ENCODE measurements at regions of chr2 and their contacts with region 1.

Region 1: GRCh38 chr2:85420536-85421259 is 2.2 kb downstream of the SH2D6 start:
- DNase-seq: peak; percentile 92
- ATAC-seq: peak; percentile 60
- H3K4me3 ChIP-seq: peak overlapping the region; percentile 49
- H3K27ac ChIP-seq: peak overlapping the region; percentile 98
- H3K4me1 ChIP-seq: peaks cover 43% of the 10 kb centered on the region
- H3K27me3 ChIP-seq: no peaks in the 10 kb centered on the region
- CTCF ChIP-seq: peak; percentile 99

Region 2: GRCh38 chr2:85457877-85458316 is 37.2 kb after region 1 on chr2:
- CTCF ChIA-PET with region 1: no interaction called
- POLR2A ChIA-PET with region 1: no interaction called
- intact Hi-C with region 1: loop called (anchors 1 kb)
- DNase-seq: peak; percentile 98
- ATAC-seq: peak; percentile 92
- H3K4me3 ChIP-seq: no peak overlapping the region
- H3K27ac ChIP-seq: peak overlapping the region; percentile 94
- H3K4me1 ChIP-seq: peaks cover 34% of the 10 kb centered on the region
- H3K27me3 ChIP-seq: no peaks in the 10 kb centered on the region
- CTCF ChIP-seq: no peak

Region 3: DNA sequence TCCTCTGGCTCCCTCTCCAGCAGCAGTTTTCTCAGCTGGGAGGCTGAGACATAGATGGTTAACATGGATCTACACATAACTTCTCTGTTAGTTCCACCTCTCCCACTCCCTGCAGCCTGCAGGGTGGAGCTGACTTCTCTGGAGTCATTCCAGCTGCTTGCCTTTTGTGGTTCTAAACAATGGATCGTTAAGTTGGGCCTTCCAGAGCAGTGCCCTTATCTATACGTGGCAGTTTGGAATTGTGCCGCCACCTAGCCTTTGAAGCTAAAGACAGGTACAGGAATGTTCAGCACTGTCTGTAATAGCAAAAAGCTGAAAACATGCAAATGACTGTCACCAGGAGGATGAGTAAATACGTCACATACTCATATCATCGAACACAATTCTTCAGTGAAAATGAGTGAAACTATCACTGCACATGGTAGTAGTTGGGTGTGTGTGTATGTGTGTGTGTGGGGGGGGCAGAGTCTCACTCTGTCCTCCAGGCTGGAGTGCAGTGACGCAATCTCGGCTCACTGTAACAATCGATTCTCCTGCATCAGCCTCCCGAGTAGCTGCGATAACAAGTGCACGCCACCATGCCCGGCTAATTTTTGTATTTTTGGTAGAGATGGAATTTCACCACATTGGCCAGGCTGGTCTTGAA is 48.1 kb after region 1 on chr2:
- CTCF ChIA-PET with region 1: interaction called, 5 read pairs
- POLR2A ChIA-PET with region 1: interaction called, 11 read pairs
- intact Hi-C with region 1: loop called (anchors 2 kb)
- DNase-seq: peak; percentile 95
- ATAC-seq: peak; percentile 80
- H3K4me3 ChIP-seq: no peak overlapping the region
- H3K27ac ChIP-seq: peak overlapping the region; percentile 50
- H3K4me1 ChIP-seq: peaks cover 31% of the 10 kb centered on the region
- H3K27me3 ChIP-seq: no peaks in the 10 kb centered on the region
- CTCF ChIP-seq: 0 out of 2 replicates have a peak, but pooled peaks have one; percentile 17

Region 4: DNA sequence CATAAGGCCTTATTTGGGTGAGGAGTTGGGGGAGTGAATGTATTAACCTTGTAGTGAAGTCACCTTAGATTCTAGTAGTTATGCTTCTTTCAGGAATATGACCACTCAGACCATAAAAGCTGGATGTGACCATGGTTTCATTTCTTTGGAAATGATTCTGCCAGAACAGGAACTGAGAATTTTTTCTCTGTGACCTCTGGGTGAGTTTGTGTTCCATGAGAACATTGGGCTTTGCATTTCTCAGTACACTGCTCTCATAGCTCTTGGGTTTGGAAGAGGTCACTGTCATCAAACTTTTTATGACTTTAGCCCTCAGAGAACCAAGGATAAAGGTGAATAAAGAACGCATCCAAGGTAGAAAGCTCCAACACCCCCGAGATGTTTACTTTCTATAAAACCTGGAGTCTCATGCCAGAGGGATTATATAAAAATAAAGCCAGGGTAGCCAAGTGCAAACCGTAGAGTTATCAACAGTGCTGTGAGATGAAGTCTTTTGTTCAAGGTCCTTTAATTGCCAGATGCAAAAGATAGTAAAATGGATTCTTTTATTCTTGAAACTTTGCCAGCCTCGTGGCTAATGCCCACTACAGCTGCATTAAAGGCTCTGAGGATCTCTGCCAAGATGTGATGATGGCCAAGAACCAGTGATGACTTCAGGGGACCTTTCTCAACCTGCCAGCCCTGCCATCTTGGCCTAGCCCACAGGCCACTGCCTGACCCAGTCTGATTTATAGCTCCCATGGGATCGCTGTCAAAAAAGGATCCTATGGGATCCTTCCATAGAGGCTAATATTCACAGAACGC is 90.5 kb after region 1 on chr2:
- CTCF ChIA-PET with region 1: no interaction called
- POLR2A ChIA-PET with region 1: interaction called, 6 read pairs
- intact Hi-C with region 1: loop called (anchors 1 kb)
- DNase-seq: peak; percentile 77
- ATAC-seq: peak; percentile 87
- H3K4me3 ChIP-seq: no peak overlapping the region
- H3K27ac ChIP-seq: peak overlapping the region; percentile 82
- H3K4me1 ChIP-seq: peaks cover 53% of the 10 kb centered on the region
- H3K27me3 ChIP-seq: no peaks in the 10 kb centered on the region
- CTCF ChIP-seq: no peak

Region 5: GRCh38 chr2:85538486-85539360 is 118.0 kb after region 1 on chr2 and contains the start of gene MAT2A:
- CTCF ChIA-PET with region 1: interaction called, 4 read pairs
- POLR2A ChIA-PET with region 1: interaction called, 17 read pairs
- intact Hi-C with region 1: loop called (anchors 1 kb)
- DNase-seq: peak; percentile 93
- ATAC-seq: peak; percentile 57
- H3K4me3 ChIP-seq: peak within 1 kb of the TSS; percentile 95
- H3K27ac ChIP-seq: peak within 1 kb of the TSS; percentile 97
- H3K4me1 ChIP-seq: peaks cover 48% of the 10 kb centered on the region
- H3K27me3 ChIP-seq: no peaks in the 10 kb centered on the region
- CTCF ChIP-seq: peak; percentile 67
- total RNA-seq, gene MAT2A: 304 and 309 TPM in 2 replicates

Region 6: GRCh38 chr2:85551698-85552678 is 131.3 kb after region 1 on chr2:
- CTCF ChIA-PET with region 1: interaction called, 14 read pairs
- POLR2A ChIA-PET with region 1: interaction called, 4 read pairs
- intact Hi-C with region 1: loop called (anchors 1 kb)
- DNase-seq: peak; percentile 92
- ATAC-seq: peak; percentile 41
- H3K4me3 ChIP-seq: no peak overlapping the region
- H3K27ac ChIP-seq: no peak overlapping the region
- H3K4me1 ChIP-seq: peaks cover 16% of the 10 kb centered on the region
- H3K27me3 ChIP-seq: no peaks in the 10 kb centered on the region
- CTCF ChIP-seq: peak; percentile 96

Region 7: GRCh38 chr2:85595301-85596025 is 174.8 kb after region 1 on chr2 and contains the start of gene RNF181:
- CTCF ChIA-PET with region 1: no interaction called
- POLR2A ChIA-PET with region 1: no interaction called
- intact Hi-C with region 1: loop called (anchors 2 kb)
- DNase-seq: peak; percentile 99
- ATAC-seq: peak; percentile 97
- H3K4me3 ChIP-seq: peak within 1 kb of the TSS; percentile 85
- H3K27ac ChIP-seq: peak within 1 kb of the TSS; percentile 69
- H3K4me1 ChIP-seq: peaks cover 20% of the 10 kb centered on the region
- H3K27me3 ChIP-seq: no peaks in the 10 kb centered on the region
- CTCF ChIP-seq: no peak
- total RNA-seq, gene RNF181: 170 and 225 TPM in 2 replicates

Region 8: DNA sequence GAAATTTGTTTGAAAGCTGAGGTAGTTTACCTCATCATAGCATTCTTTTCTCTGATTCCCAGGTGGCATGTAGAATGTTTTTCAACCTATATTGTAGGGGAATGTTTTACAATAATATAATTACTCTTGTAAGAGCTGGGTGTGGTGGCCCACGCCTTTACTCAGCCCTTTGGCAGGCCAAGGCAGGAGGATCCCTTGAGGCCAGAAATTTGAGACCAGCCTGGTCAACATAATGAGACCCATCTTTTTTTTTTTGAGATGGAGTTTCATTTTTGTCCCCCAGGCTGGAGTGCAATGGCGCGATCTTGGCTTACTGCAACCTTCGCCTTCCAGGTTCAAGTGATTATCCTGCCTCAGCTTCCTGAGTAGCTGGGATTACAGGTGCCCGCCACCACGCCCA is 198.9 kb after region 1 on chr2:
- CTCF ChIA-PET with region 1: no interaction called
- POLR2A ChIA-PET with region 1: no interaction called
- intact Hi-C with region 1: no loop called
- DNase-seq: no peak
- ATAC-seq: no peak
- H3K4me3 ChIP-seq: no peak overlapping the region
- H3K27ac ChIP-seq: no peak overlapping the region
- H3K4me1 ChIP-seq: peaks cover 19% of the 10 kb centered on the region
- H3K27me3 ChIP-seq: no peaks in the 10 kb centered on the region
- CTCF ChIP-seq: no peak

Measured in PC-3 (cell line).